ENCODE measurements at regions of chr11 and their contacts with region 1.

Region 1: DNA sequence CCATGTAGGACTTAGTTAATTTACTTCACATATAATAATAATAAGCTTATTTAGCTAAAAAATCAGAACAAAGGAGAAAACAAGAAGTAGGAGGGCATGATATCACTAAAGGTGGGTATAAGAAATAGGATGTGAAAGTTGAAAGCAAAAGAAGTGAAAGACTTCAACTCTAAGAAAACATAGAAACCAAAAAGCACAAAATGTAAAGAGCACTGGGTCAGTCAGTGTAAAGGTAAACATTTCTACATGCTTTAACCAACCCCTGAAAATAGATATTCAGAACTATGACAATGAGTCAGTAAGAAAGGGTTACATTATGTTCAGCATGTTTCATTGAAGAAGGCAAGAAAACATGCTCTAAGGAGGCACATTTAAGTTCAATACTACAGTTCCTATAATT is 298.8 kb downstream of the SWAP70 start:
- DNase-seq: no peak
- H3K4me3 ChIP-seq: no peak overlapping the region
- H3K27ac ChIP-seq: no peak overlapping the region
- H3K4me1 ChIP-seq: no peaks in the 10 kb centered on the region
- H3K27me3 ChIP-seq: no peaks in the 10 kb centered on the region
- CTCF ChIP-seq: no peak
- EP300 ChIP-seq: no peak
- POLR2A ChIP-seq: no peak

Region 2: DNA sequence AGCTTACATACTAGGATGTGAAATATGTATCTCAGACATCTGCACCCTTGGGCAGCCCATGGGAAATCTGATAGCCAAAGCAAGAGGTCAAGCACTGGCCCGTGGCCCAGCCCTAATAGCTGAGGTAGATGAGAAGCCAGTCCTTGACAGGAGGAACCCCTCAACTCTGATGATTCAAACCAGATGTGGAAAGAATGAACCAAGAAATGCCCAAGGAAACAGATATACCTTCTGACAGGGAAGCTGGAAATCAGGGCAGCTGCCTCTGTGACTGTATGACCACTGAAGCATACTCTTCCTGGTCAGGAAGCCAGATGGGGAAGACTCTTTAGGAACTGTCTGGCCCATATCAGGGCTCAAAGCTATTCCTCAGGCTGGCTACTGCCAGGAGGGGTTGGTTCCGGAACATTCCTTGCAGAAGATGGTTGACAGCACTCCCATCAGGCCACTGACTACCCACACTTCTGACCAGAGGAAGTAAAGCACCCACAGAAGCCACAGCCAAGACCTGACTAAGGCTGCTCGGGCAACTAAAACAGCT is 174.7 kb before region 1 on chr11:
- intact Hi-C with region 1: loop called (anchors 10 kb)
- DNase-seq: no peak
- H3K4me3 ChIP-seq: no peak overlapping the region
- H3K27ac ChIP-seq: peak overlapping the region in 4 of 5 donors; percentile 20 to 62 (median 37)
- H3K4me1 ChIP-seq: peaks cover 0 to 13% (median 7%) of the 10 kb centered on the region in 4 donors
- H3K27me3 ChIP-seq: no peaks in the 10 kb centered on the region
- CTCF ChIP-seq: no peak
- EP300 ChIP-seq: no peak
- POLR2A ChIP-seq: no peak

Region 3: DNA sequence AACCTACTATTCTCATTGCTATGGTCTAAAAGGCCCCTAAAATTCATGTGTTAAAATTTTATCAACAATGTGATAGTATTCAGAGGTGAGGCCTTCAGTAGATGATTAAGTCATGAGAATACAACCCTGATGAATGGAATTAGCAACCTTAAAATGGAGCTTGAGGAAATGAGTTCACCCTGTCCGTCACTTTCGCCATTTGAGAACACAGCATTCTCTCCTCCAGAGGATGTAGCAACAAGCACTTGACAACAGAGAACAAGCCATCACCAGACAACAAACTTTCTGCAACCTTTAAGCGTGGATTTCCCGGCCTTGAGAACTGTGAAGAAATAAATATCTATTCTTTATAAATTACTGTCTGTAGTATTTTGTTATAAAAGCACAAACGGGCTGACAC is 134.3 kb after region 1 on chr11:
- intact Hi-C with region 1: no loop called
- DNase-seq: no peak
- H3K4me3 ChIP-seq: no peak overlapping the region
- H3K27ac ChIP-seq: no peak overlapping the region
- H3K4me1 ChIP-seq: peaks cover 0 to 7% (median 2%) of the 10 kb centered on the region in 4 donors
- H3K27me3 ChIP-seq: no peaks in the 10 kb centered on the region
- CTCF ChIP-seq: no peak
- EP300 ChIP-seq: no peak
- POLR2A ChIP-seq: no peak